Colonic mucosa (tissue), 4 donors: ENCODE measurements at regions of chr14 and their contacts with region 1.

Region 1: GRCh38 chr14:95431199-95432143 is 85.0 kb downstream of the SYNE3 start:
- DNase-seq: peak; percentile 27
- H3K4me3 ChIP-seq: no peak overlapping the region
- H3K27ac ChIP-seq: no peak overlapping the region
- H3K4me1 ChIP-seq: no peaks in the 10 kb centered on the region
- H3K27me3 ChIP-seq: no peaks in the 10 kb centered on the region
- CTCF ChIP-seq: peak; percentile 42

Region 2: GRCh38 chr14:95098984-95099599 is 332.4 kb before region 1 on chr14:
- intact Hi-C with region 1: loop called (anchors 5 kb)
- DNase-seq: peak; percentile 65
- H3K4me3 ChIP-seq: no peak overlapping the region
- H3K27ac ChIP-seq: no peak overlapping the region
- H3K4me1 ChIP-seq: no peaks in the 10 kb centered on the region
- H3K27me3 ChIP-seq: no peaks in the 10 kb centered on the region
- CTCF ChIP-seq: peak; percentile 45

Region 3: GRCh38 chr14:95408731-95409476 is 22.6 kb before region 1 on chr14:
- intact Hi-C with region 1: no loop called
- DNase-seq: no peak
- H3K4me3 ChIP-seq: no peak overlapping the region
- H3K27ac ChIP-seq: no peak overlapping the region
- H3K4me1 ChIP-seq: no peaks in the 10 kb centered on the region
- H3K27me3 ChIP-seq: no peaks in the 10 kb centered on the region
- CTCF ChIP-seq: no peak

Region 4: GRCh38 chr14:95774265-95775160 is 343.0 kb after region 1 on chr14:
- intact Hi-C with region 1: loop called (anchors 10 kb)
- DNase-seq: peak; percentile 47
- H3K4me3 ChIP-seq: no peak overlapping the region
- H3K27ac ChIP-seq: no peak overlapping the region
- H3K4me1 ChIP-seq: no peaks in the 10 kb centered on the region
- H3K27me3 ChIP-seq: no peaks in the 10 kb centered on the region
- CTCF ChIP-seq: peak; percentile 78